ENCODE measurements at regions of chr3 and their contacts with region 1.

Region 1: DNA sequence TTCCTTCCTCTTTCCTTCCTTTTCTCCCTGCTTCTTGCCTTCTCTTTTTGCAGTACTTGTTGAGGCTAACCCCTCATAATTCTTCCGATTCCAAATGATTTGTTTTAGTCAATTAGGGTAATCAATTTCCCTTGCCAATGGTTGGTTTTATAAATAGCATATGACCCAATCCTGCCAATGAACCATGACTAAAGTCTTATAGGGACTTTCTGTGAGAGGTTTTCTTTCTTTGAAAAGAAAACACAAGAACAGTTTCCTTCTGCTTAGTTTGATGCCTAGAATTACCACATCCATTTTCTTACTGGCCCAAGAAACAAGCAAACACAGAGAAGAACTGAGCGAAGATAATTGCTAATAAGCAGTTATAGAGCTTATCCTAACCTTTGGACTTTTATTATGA is 292.5 kb upstream of the SATB1 start:
- DNase-seq: no peak
- ATAC-seq: peak; percentile 31
- H3K4me3 Mint-ChIP-seq: peak overlapping the region; percentile 24
- H3K27ac Mint-ChIP-seq: peak overlapping the region; percentile 97
- H3K4me1 Mint-ChIP-seq: peaks cover 74% of the 10 kb centered on the region
- H3K27me3 Mint-ChIP-seq: no peaks in the 10 kb centered on the region

Region 2: DNA sequence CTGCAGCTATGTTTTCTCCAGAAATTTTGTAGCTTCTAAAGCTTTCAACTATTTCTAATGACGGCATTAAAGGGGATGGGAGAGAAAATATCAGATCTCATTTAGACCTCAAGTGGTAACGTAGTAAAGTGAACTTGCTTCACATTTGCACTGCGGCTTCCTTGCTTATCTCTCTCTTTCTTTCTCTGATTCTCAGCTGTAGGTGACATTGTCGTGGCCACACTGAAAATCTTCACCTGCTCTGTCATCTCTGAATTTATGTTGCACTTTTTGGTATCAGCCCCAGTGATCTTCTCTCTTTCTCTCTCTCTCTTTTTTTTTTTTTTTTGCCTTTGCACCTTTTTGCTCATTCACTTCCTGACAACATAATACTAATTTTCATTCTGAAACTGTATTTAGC is 38.4 kb before region 1 on chr3:
- CTCF ChIA-PET with region 1: interaction called, 14 read pairs
- DNase-seq: peak; percentile 81
- ATAC-seq: peak; percentile 79
- H3K4me3 Mint-ChIP-seq: peak overlapping the region; percentile 51
- H3K27ac Mint-ChIP-seq: peak overlapping the region; percentile 89
- H3K4me1 Mint-ChIP-seq: peaks cover 87% of the 10 kb centered on the region
- H3K27me3 Mint-ChIP-seq: no peaks in the 10 kb centered on the region

Measured in activated CD8-positive, alpha-beta memory T cell treated with anti-CD3 and anti-CD28 coated beads, Interleukin-2, amount 10 ng/mL, durations not matched to agents 7 days and 5 days (primary cell).